B cell (primary cell): ENCODE measurements at regions of chr1 and their contacts with region 1.

Region 1: DNA sequence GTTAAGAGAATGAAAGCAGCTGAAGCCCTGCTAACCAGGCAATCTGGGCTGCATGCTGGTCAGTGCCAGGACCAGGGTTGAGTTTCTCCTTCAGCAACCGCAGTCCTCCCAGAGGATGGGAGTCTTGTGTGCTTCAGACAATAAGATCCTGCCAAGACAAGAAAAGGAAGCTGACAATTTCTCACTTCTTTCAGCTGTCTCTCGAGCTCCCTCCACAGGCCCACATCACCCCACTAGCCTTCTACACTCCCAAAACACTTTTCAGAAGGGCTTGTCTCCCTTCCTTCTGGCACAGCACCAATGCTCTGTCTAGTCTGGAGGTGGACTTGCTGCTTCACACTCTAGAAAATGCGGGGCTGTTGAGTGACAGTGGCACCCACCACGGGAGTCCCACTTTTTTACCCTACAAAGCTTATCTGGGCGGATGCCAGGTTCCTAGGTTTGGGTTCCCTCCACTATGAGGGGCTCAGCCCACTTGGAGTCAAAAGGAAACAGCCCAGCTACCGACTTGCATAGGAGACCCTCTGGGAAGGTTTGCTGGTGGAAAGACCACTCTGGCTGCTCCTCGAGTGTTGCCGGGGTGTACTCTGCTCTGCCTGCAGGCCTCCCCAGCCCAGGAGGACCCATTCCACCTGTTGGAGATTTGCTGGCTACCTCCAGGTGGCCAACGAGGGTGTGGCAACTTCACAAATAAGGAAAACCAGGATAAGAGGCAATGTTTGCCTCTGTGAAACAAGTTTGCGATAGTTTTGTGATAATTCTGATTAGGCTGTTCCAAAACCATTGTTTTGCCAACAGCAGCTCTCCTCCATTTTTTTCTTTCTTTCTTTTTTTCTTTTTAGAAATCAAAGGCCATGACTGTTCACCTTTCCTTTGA is 68.9 kb downstream of the TENT5C start:
- DNase-seq: peak; percentile 81
- ATAC-seq: peak; percentile 77
- H3K4me3 ChIP-seq: no peak overlapping the region
- H3K4me3 Mint-ChIP-seq: peak overlapping the region; percentile 44
- H3K27ac ChIP-seq: no peak overlapping the region
- H3K27ac Mint-ChIP-seq: peak overlapping the region; percentile 84
- H3K4me1 ChIP-seq: peaks cover 36 to 43% of the 10 kb centered on the region in 2 donors
- H3K4me1 Mint-ChIP-seq: peaks cover 57% of the 10 kb centered on the region
- H3K27me3 ChIP-seq: no peaks in the 10 kb centered on the region
- H3K27me3 Mint-ChIP-seq: no peaks in the 10 kb centered on the region
- CTCF ChIP-seq: peak; percentile 73

Region 2: DNA sequence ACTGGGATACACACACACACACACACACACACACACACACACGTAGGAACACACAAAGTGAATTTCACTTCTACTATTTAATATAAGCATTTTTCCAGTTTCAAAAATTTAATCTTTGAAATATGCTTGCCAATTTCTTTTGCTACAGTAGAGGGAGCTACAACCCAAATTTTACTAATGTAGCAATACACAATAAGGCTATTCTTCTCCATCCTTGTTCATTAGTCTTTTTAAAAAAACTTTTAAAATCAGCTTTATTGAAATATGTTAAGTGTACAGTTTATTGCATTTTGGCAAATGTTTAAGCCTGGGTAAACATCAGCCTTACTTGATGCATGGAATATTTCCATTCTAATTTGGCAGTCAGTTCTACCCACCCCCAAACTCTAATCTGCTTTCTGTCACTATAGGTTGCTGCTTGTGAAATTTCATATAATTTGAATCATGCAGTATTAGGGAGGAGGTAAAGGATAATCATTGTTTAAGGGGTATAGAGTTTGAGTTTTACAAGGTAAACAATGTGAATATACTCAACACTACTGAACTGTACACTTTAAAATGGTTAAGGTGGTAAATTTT is 161.9 kb before region 1 on chr1:
- CTCF ChIA-PET with region 1: interaction called, 91 read pairs
- POLR2A ChIA-PET with region 1: no interaction called
- intact Hi-C with region 1: loop called (anchors 1 kb)
- DNase-seq: peak; percentile 52
- ATAC-seq: peak; percentile 51
- H3K4me3 ChIP-seq: no peak overlapping the region
- H3K4me3 Mint-ChIP-seq: no peak overlapping the region
- H3K27ac ChIP-seq: no peak overlapping the region
- H3K27ac Mint-ChIP-seq: no peak overlapping the region
- H3K4me1 ChIP-seq: no peaks in the 10 kb centered on the region
- H3K4me1 Mint-ChIP-seq: peaks cover 5% of the 10 kb centered on the region
- H3K27me3 ChIP-seq: no peaks in the 10 kb centered on the region
- H3K27me3 Mint-ChIP-seq: no peaks in the 10 kb centered on the region
- CTCF ChIP-seq: peak; percentile 82

Region 3: GRCh38 chr1:117534995-117535467 is 139.7 kb before region 1 on chr1:
- CTCF ChIA-PET with region 1: interaction called, 518 read pairs
- POLR2A ChIA-PET with region 1: interaction called, 8 read pairs
- intact Hi-C with region 1: loop called (anchors 1 kb)
- DNase-seq: peak; percentile 84
- ATAC-seq: peak; percentile 85
- H3K4me3 ChIP-seq: no peak overlapping the region
- H3K4me3 Mint-ChIP-seq: peak overlapping the region; percentile 27
- H3K27ac ChIP-seq: no peak overlapping the region
- H3K27ac Mint-ChIP-seq: peak overlapping the region; percentile 54
- H3K4me1 ChIP-seq: peaks cover 28 to 36% of the 10 kb centered on the region in 2 donors
- H3K4me1 Mint-ChIP-seq: peaks cover 2% of the 10 kb centered on the region
- H3K27me3 ChIP-seq: no peaks in the 10 kb centered on the region
- H3K27me3 Mint-ChIP-seq: no peaks in the 10 kb centered on the region
- CTCF ChIP-seq: peak; percentile 77

Region 4: GRCh38 chr1:117605774-117606648 is 68.7 kb before region 1 on chr1 and contains the start of gene TENT5C:
- CTCF ChIA-PET with region 1: interaction called, 85 read pairs
- POLR2A ChIA-PET with region 1: interaction called, 12 read pairs
- intact Hi-C with region 1: loop called (anchors 1 kb)
- DNase-seq: peak; percentile 99
- ATAC-seq: peak; percentile 88
- H3K4me3 ChIP-seq: peak within 1 kb of the TSS; percentile 95 to 99 (median 97)
- H3K4me3 Mint-ChIP-seq: peak within 1 kb of the TSS; percentile 99
- H3K27ac ChIP-seq: peak within 1 kb of the TSS; percentile 88 to 96
- H3K27ac Mint-ChIP-seq: peak within 1 kb of the TSS; percentile 96
- H3K4me1 ChIP-seq: peaks cover 38 to 49% of the 10 kb centered on the region in 2 donors
- H3K4me1 Mint-ChIP-seq: peaks cover 52% of the 10 kb centered on the region
- H3K27me3 ChIP-seq: peaks cover 0 to 1% (median 0%) of the 10 kb centered on the region in 4 experiments
- H3K27me3 Mint-ChIP-seq: no peaks in the 10 kb centered on the region
- CTCF ChIP-seq: no peak
- total RNA-seq, gene TENT5C: 112 TPM in 2 replicates

Region 5: GRCh38 chr1:117632269-117633067 is 42.3 kb before region 1 on chr1:
- CTCF ChIA-PET with region 1: interaction called, 81 read pairs
- POLR2A ChIA-PET with region 1: interaction called, 3 read pairs
- intact Hi-C with region 1: loop called (anchors 2 kb)
- DNase-seq: no peak
- ATAC-seq: no peak
- H3K4me3 ChIP-seq: no peak overlapping the region
- H3K4me3 Mint-ChIP-seq: peak overlapping the region; percentile 23
- H3K27ac ChIP-seq: no peak overlapping the region
- H3K27ac Mint-ChIP-seq: peak overlapping the region; percentile 52
- H3K4me1 ChIP-seq: peaks cover 87 to 89% of the 10 kb centered on the region in 2 donors
- H3K4me1 Mint-ChIP-seq: peaks cover 97% of the 10 kb centered on the region
- H3K27me3 ChIP-seq: no peaks in the 10 kb centered on the region
- H3K27me3 Mint-ChIP-seq: no peaks in the 10 kb centered on the region
- CTCF ChIP-seq: no peak

Region 6: GRCh38 chr1:117644696-117645311 is 30.0 kb before region 1 on chr1:
- CTCF ChIA-PET with region 1: interaction called, 262 read pairs
- POLR2A ChIA-PET with region 1: no interaction called
- intact Hi-C with region 1: no loop called
- DNase-seq: no peak
- ATAC-seq: peak; percentile 70
- H3K4me3 ChIP-seq: no peak overlapping the region
- H3K4me3 Mint-ChIP-seq: peak overlapping the region; percentile 21
- H3K27ac ChIP-seq: no peak overlapping the region
- H3K27ac Mint-ChIP-seq: no peak overlapping the region
- H3K4me1 ChIP-seq: peaks cover 41 to 45% of the 10 kb centered on the region in 2 donors
- H3K4me1 Mint-ChIP-seq: peaks cover 22% of the 10 kb centered on the region
- H3K27me3 ChIP-seq: no peaks in the 10 kb centered on the region
- H3K27me3 Mint-ChIP-seq: no peaks in the 10 kb centered on the region
- CTCF ChIP-seq: no peak

Region 7: DNA sequence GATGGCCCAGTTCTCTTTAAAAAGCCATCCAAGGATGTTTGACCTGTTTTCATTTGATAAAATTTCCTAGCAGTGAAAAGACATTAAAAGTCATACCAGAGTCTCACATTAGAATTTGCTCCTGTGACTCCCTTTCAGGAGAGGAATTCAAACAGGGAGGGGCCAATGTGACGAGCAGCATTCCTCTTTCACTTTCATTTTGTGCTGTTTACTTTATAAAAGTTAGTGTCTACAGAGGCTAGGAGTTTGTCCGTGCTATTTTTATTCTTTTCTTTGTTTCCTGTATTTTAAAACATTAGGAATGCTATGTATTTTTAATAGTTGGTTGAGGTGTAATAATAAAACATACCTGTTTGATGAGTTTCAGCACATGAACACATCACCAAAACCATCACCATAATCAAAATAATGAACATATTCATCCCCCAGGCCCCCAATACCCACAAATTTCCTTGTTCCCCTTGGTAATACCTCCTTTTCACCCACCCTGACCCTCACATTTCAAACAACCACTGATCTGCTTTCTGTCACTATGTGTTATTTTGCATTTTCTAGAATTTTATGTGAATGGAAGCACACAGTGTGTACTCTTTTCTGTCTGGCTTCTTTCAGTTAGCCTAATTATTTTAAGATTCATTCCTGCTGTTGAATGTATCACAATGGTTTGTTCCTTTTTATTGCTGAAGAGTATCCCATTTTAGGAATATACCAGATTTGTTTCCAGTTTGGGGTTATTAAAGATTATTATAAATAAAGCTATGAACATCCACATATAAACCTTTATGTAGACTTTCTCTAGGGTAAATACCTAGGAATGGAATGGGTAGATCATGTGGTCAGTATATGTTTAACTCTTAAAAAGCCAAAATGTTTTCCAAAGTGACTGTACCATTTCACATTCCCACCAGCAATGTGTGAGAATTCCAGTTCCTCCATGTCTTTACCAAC is 60.6 kb after region 1 on chr1:
- CTCF ChIA-PET with region 1: interaction called, 14 read pairs
- POLR2A ChIA-PET with region 1: no interaction called
- intact Hi-C with region 1: no loop called
- DNase-seq: peak; percentile 61
- ATAC-seq: peak; percentile 57
- H3K4me3 ChIP-seq: peak overlapping the region; percentile 6 to 79 (median 41)
- H3K4me3 Mint-ChIP-seq: peak overlapping the region; percentile 88
- H3K27ac ChIP-seq: peak overlapping the region; percentile 42 to 78
- H3K27ac Mint-ChIP-seq: peak overlapping the region; percentile 91
- H3K4me1 ChIP-seq: peaks cover 12% of the 10 kb centered on the region in 2 donors
- H3K4me1 Mint-ChIP-seq: peaks cover 14% of the 10 kb centered on the region
- H3K27me3 ChIP-seq: no peaks in the 10 kb centered on the region
- H3K27me3 Mint-ChIP-seq: no peaks in the 10 kb centered on the region
- CTCF ChIP-seq: no peak